ENCODE measurements at regions of chr13 and their contacts with region 1.

Region 1: DNA sequence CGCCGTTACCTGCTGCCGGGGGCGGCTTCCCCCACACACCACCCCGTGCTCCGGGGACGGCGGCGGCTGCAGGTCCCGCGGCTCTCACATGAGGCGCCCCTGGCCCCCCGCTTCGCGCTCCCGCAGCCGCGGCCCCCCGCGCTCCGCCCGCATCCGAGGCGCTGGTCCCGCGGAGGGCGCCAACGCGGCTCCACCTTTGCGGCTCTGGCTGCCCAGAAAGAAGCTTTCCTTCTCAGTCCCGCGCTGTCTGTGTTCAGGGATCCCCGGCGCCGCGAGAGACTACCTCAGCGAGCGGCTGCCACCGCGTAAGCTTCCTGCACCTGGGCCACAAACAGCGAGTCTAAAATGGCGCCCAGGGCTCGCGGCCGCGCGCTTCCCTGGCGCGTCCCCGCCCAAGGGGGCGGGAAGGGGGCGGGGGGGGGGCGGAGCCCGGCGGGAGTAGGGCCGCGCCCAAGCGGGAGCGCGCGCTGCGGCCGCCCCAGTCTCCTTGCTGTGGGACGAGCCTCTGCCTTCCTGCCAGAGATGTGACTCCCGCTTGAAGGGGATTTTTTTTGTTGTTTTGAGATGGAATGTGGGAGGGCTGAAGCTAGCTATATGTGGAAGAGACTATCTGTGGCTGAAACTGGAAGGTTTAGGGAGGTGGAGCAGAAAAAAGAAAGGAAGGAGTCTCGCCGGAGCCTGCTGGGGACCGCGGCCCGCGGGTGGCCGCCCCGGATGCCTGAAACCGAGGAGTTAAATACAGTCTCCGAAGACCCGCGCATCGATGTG is at the start of gene FBXL3:
- DNase-seq: peak; percentile 80 to 86 (median 84)
- ATAC-seq: peak; percentile 77
- H3K4me3 ChIP-seq: peak within 1 kb of the TSS; percentile 93
- H3K27ac ChIP-seq: peak within 1 kb of the TSS; percentile 96
- H3K4me1 ChIP-seq: peaks cover 6 to 8% of the 10 kb centered on the region in 2 experiments; a peak in 4 of 5 replicates
- H3K27me3 ChIP-seq: no peaks in the 10 kb centered on the region
- CTCF ChIP-seq: no peak
- EP300 ChIP-seq: no peak
- POLR2A ChIP-seq: peak; percentile 87
- RAD21 ChIP-seq: no peak
- polyA plus RNA-seq, gene FBXL3: 3.8 to 4.0 TPM

Region 2: GRCh38 chr13:76570510-76570971 is 456.5 kb before region 1 on chr13:
- CTCF ChIA-PET with region 1: no interaction called
- POLR2A ChIA-PET with region 1: no interaction called
- in situ Hi-C with region 1: no loop called
- intact Hi-C with region 1: no loop called
- DNase-seq: no peak
- ATAC-seq: no peak
- H3K4me3 ChIP-seq: no peak overlapping the region
- H3K27ac ChIP-seq: no peak overlapping the region
- H3K4me1 ChIP-seq: no peaks in the 10 kb centered on the region
- H3K27me3 ChIP-seq: no peaks in the 10 kb centered on the region
- CTCF ChIP-seq: no peak
- EP300 ChIP-seq: no peak
- POLR2A ChIP-seq: no peak
- RAD21 ChIP-seq: no peak

Region 3: GRCh38 chr13:76886292-76887075 is 140.5 kb before region 1 on chr13 and contains the start of gene KCTD12:
- CTCF ChIA-PET with region 1: no interaction called
- POLR2A ChIA-PET with region 1: no interaction called
- in situ Hi-C with region 1: no loop called
- intact Hi-C with region 1: no loop called
- DNase-seq: peak; percentile 52 to 71 (median 58)
- ATAC-seq: peak; percentile 99
- H3K4me3 ChIP-seq: peak within 1 kb of the TSS; percentile 44
- H3K27ac ChIP-seq: no peak within 1 kb of the TSS
- H3K4me1 ChIP-seq: peaks cover 0 to 20% of the 10 kb centered on the region in 2 experiments; a peak in 2 of 5 replicates
- H3K27me3 ChIP-seq: peaks cover 0 to 14% of the 10 kb centered on the region in 2 experiments; a peak in 2 of 5 replicates
- CTCF ChIP-seq: peak in 2 of 3 experiments; percentile 4 to 40; a peak in 1 of 6 replicates
- EP300 ChIP-seq: no peak
- POLR2A ChIP-seq: no peak
- RAD21 ChIP-seq: no peak
- polyA plus RNA-seq, gene KCTD12: 0.14 to 0.24 TPM

Region 4: DNA sequence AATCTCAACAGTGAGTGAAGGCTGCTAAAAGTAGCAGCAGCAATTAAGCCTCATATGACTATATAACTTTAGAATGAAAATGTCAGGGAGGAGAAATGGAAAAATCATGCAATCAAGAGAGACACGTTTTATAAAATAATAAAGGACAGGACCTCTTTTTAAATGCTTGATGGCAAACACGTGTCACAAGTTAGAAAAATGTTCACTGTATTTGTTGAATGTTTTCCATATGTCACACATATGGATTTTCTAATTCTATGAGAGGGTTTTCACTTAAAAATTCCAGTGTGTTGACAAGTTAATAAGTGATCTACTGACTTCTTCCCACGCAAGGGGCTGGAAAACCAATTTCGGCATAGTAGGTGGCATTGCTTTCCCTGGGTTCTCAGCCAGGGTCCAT is 113.1 kb before region 1 on chr13:
- CTCF ChIA-PET with region 1: no interaction called
- POLR2A ChIA-PET with region 1: no interaction called
- in situ Hi-C with region 1: no loop called
- intact Hi-C with region 1: no loop called
- DNase-seq: no peak
- ATAC-seq: no peak
- H3K4me3 ChIP-seq: no peak overlapping the region
- H3K27ac ChIP-seq: no peak overlapping the region
- H3K4me1 ChIP-seq: peaks cover 7 to 12% of the 10 kb centered on the region in 2 experiments; a peak in 4 of 5 replicates
- H3K27me3 ChIP-seq: no peaks in the 10 kb centered on the region
- CTCF ChIP-seq: no peak
- EP300 ChIP-seq: no peak
- POLR2A ChIP-seq: no peak
- RAD21 ChIP-seq: no peak

Region 5: DNA sequence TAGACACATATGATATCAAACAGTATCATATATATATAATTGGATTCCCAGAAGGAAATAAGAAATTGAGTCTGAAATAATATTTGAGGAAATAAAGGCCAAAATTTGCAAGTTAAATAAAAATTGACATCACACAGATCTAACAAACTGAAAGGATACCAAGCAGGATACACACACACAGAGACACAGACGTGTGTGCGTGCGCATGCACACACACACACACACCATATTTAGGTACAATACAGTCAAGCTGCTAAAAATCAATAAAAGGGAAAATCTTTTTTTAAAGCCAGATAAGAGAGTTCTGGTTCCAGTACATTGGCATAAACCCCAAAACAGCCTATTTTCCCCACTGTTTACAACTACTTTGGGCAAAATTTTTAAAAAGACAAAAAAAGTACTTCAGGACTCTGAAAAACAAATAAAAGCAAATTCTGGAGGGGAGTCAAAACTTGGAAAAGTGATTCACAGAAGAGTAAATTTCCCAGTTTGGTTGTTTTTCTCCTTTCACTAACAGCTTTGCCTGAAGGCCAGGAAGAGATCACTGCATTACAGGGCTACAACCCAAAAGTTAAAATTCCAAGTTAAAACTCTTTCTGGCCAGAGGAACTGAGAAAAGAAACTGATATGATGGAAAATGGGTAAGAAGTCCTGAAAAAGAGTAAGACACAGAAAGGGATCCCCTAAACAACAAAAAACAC is 283.7 kb after region 1 on chr13:
- CTCF ChIA-PET with region 1: no interaction called
- POLR2A ChIA-PET with region 1: no interaction called
- in situ Hi-C with region 1: loop called (anchors 10 kb)
- intact Hi-C with region 1: no loop called
- DNase-seq: no peak
- ATAC-seq: no peak
- H3K4me3 ChIP-seq: no peak overlapping the region
- H3K27ac ChIP-seq: no peak overlapping the region
- H3K4me1 ChIP-seq: no peaks in the 10 kb centered on the region
- H3K27me3 ChIP-seq: no peaks in the 10 kb centered on the region
- CTCF ChIP-seq: no peak
- EP300 ChIP-seq: no peak
- POLR2A ChIP-seq: no peak
- RAD21 ChIP-seq: no peak

Region 6: GRCh38 chr13:78476910-78477309 is 1449.9 kb after region 1 on chr13:
- CTCF ChIA-PET with region 1: no interaction called
- POLR2A ChIA-PET with region 1: no interaction called
- in situ Hi-C with region 1: no loop called
- intact Hi-C with region 1: no loop called
- DNase-seq: no peak
- ATAC-seq: no peak
- H3K4me3 ChIP-seq: no peak overlapping the region
- H3K27ac ChIP-seq: no peak overlapping the region
- H3K4me1 ChIP-seq: no peaks in the 10 kb centered on the region
- H3K27me3 ChIP-seq: no peaks in the 10 kb centered on the region
- CTCF ChIP-seq: no peak
- EP300 ChIP-seq: no peak
- POLR2A ChIP-seq: no peak
- RAD21 ChIP-seq: no peak

Measured in K562 (cell line).